ENCODE measurements at regions of chr4 and their contacts with region 1.

Region 1: DNA sequence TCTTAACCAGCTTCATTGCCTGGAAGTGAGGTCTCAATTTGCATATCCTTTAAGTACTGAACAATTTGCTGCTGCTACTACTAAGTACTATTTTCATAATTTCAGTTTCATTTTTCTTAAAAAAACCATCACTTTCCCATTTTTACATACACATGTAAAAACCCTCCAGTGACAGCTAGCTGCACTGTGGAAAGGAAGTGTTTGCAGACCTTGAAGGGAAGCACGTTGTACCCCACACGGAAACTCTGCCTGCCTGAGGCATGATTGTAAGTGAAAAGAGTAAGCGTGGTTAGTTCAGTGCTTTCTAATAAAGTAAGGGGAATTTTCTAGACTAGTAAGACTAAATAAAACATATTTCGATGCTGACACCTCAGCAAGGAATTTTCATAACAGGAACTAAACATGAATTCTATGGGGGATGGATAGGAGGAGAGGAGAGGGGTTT is 103.6 kb downstream of the RAPGEF2 start:
- DNase-seq: no peak
- H3K4me3 ChIP-seq: no peak overlapping the region
- H3K27ac ChIP-seq: peak overlapping the region in 1 of 59 donors; percentile 25
- H3K27me3 ChIP-seq: no peaks in the 10 kb centered on the region
- CTCF ChIP-seq: no peak

Region 2: GRCh38 chr4:158722917-158723793 is 483.3 kb before region 1 on chr4 and contains the start of gene PPID:
- intact Hi-C with region 1: loop called in 1 of 2 experiments (anchors 10 kb)
- DNase-seq: peak; percentile 76 to 91 (median 85)
- H3K4me3 ChIP-seq: peak within 1 kb of the TSS; percentile 66 to 100 (median 92)
- H3K27ac ChIP-seq: peak within 1 kb of the TSS; percentile 75 to 99 (median 96)
- H3K27me3 ChIP-seq: no peaks in the 10 kb centered on the region
- CTCF ChIP-seq: peak in 37 of 56 donors; percentile 9 to 62 (median 32)
- total RNA-seq, gene PPID: 18.4 to 71.3 (median 35.6) TPM

Region 3: GRCh38 chr4:158729716-158730559 is 476.5 kb before region 1 on chr4:
- intact Hi-C with region 1: loop called (anchors 2 to 10 kb)
- DNase-seq: peak; percentile 44 to 87 (median 68)
- H3K4me3 ChIP-seq: peak overlapping the region in 1 of 59 donors; percentile 1
- H3K27ac ChIP-seq: peak overlapping the region in 1 of 59 donors; percentile 28
- H3K27me3 ChIP-seq: no peaks in the 10 kb centered on the region
- CTCF ChIP-seq: peak; percentile 66 to 98 (median 91)

Region 4: GRCh38 chr4:159312236-159312635 is 105.8 kb after region 1 on chr4:
- intact Hi-C with region 1: loop called in 1 of 2 experiments (anchors 10 kb)
- DNase-seq: no peak
- H3K4me3 ChIP-seq: no peak overlapping the region
- H3K27ac ChIP-seq: peak overlapping the region in 2 of 59 donors; percentile 7 to 10
- H3K27me3 ChIP-seq: no peaks in the 10 kb centered on the region
- CTCF ChIP-seq: no peak

Region 5: GRCh38 chr4:159446266-159446976 is 240.0 kb after region 1 on chr4:
- intact Hi-C with region 1: loop called in 1 of 2 experiments (anchors 10 kb)
- DNase-seq: peak in 7 of 10 donors; percentile 14 to 53 (median 41)
- H3K4me3 ChIP-seq: no peak overlapping the region
- H3K27ac ChIP-seq: peak overlapping the region in 1 of 59 donors; percentile 21
- H3K27me3 ChIP-seq: no peaks in the 10 kb centered on the region
- CTCF ChIP-seq: peak; percentile 72 to 95 (median 88)

Region 6: DNA sequence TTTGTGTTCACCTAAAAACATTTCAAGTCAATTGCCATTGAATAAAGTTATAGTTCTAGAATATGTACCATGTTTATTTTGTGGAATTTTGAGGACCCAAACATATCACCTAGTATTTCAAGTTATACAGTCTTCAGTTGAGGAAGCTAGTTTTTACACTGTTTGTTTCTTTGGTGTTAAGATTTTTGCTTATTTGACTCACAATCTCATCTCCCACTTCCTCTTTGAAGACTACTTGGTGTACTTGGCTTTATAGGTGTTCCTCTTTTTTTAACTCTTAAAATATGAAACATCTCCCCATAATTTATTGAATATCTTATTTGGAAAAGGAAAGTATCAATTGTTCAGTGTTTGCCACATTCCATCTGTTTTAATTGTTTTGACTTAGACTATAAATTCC is 571.8 kb after region 1 on chr4:
- intact Hi-C with region 1: no loop called
- DNase-seq: no peak
- H3K4me3 ChIP-seq: no peak overlapping the region
- H3K27ac ChIP-seq: no peak overlapping the region
- H3K27me3 ChIP-seq: no peaks in the 10 kb centered on the region
- CTCF ChIP-seq: no peak

Measured in dorsolateral prefrontal cortex (tissue), 120 donors.